ENCODE measurements at regions of chr13 and their contacts with region 1.

Region 1: DNA sequence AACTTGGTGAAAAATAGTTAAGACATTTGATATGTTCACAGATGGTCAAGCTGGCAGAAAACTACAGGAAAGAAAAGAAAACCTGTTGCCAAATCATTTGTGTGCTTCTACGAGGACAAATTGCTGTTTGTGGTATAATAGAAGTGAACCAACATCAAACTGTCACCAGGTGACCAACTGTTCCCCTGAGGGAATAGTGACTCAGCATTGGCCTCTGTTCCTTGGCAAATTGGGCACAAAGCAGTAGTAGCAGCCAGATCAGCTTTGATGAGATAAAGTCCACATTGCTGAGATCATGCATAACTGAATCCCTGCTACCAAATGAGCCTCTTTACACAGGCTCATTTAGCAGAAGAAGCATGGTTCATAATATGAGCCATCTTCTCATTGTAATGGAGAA is 103.5 kb downstream of the POSTN start:
- DNase-seq: no peak
- ATAC-seq: no peak
- H3K4me3 ChIP-seq: no peak overlapping the region
- H3K4me3 Mint-ChIP-seq: no peak overlapping the region
- H3K27ac ChIP-seq: no peak overlapping the region
- H3K27ac Mint-ChIP-seq: no peak overlapping the region
- H3K4me1 ChIP-seq: no peaks in the 10 kb centered on the region
- H3K4me1 Mint-ChIP-seq: no peaks in the 10 kb centered on the region
- H3K27me3 ChIP-seq: no peaks in the 10 kb centered on the region
- H3K27me3 Mint-ChIP-seq: no peaks in the 10 kb centered on the region
- CTCF ChIP-seq: no peak

Region 2: DNA sequence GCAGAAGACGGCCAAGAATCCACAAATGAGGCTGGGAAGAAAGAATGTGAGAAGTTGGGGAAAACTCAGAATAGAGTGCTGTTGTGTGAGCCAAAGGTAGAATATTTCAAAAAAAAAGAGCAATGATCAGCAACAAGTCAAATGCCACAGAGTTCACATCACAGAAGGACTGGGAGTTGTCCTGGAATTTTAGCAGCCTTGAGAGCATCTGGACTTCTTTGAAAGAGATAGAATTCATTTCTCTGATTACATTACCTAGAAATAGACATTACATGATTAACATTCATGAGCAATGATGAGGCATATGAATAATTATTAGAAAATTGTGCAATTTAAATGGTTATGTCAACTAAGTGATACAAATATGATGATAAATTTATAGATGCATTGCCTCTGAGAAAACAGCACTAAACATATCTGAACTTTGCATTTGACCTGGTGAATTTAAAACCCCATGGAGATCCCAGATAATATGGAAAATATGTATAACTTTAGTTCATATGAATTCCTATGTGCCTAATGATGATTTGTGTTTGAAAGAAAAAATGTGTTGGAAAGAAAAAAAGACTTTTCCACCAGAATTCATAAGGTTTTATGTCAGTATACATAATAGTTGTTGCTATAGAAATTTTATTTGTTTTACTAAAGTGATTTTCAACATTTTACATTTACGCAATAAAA is 82.7 kb before region 1 on chr13:
- CTCF ChIA-PET with region 1: no interaction called
- POLR2A ChIA-PET with region 1: no interaction called
- intact Hi-C with region 1: no loop called
- DNase-seq: no peak
- ATAC-seq: no peak
- H3K4me3 ChIP-seq: no peak overlapping the region
- H3K4me3 Mint-ChIP-seq: no peak overlapping the region
- H3K27ac ChIP-seq: no peak overlapping the region
- H3K27ac Mint-ChIP-seq: no peak overlapping the region
- H3K4me1 ChIP-seq: no peaks in the 10 kb centered on the region
- H3K4me1 Mint-ChIP-seq: no peaks in the 10 kb centered on the region
- H3K27me3 ChIP-seq: no peaks in the 10 kb centered on the region
- H3K27me3 Mint-ChIP-seq: no peaks in the 10 kb centered on the region
- CTCF ChIP-seq: no peak

Region 3: GRCh38 chr13:37510441-37510840 is 15.4 kb after region 1 on chr13:
- CTCF ChIA-PET with region 1: no interaction called
- POLR2A ChIA-PET with region 1: no interaction called
- intact Hi-C with region 1: loop called (anchors 1 kb)
- DNase-seq: no peak
- ATAC-seq: no peak
- H3K4me3 ChIP-seq: no peak overlapping the region
- H3K4me3 Mint-ChIP-seq: no peak overlapping the region
- H3K27ac ChIP-seq: no peak overlapping the region
- H3K27ac Mint-ChIP-seq: no peak overlapping the region
- H3K4me1 ChIP-seq: no peaks in the 10 kb centered on the region
- H3K4me1 Mint-ChIP-seq: no peaks in the 10 kb centered on the region
- H3K27me3 ChIP-seq: no peaks in the 10 kb centered on the region
- H3K27me3 Mint-ChIP-seq: no peaks in the 10 kb centered on the region
- CTCF ChIP-seq: no peak

Measured in B cell (primary cell).